Left lung (tissue), 14 donors: ENCODE measurements at regions of chr10 and their contacts with region 1.

Region 1: GRCh38 chr10:68897336-68897741 is 3.8 kb upstream of the DDX50 start:
- DNase-seq: peak in 2 of 4 donors; percentile 61 to 82
- ATAC-seq: no peak
- H3K4me3 ChIP-seq: no peak overlapping the region
- H3K27ac ChIP-seq: no peak overlapping the region
- H3K4me1 ChIP-seq: peaks cover 4 to 17% of the 10 kb centered on the region in 2 donors
- H3K27me3 ChIP-seq: no peaks in the 10 kb centered on the region
- CTCF ChIP-seq: peak; percentile 18 to 40

Region 2: GRCh38 chr10:68492118-68492517 is 405.2 kb before region 1 on chr10:
- intact Hi-C with region 1: no loop called
- DNase-seq: peak in 1 of 4 donors; percentile 19
- ATAC-seq: no peak
- H3K4me3 ChIP-seq: no peak overlapping the region
- H3K27ac ChIP-seq: no peak overlapping the region
- H3K4me1 ChIP-seq: no peaks in the 10 kb centered on the region
- H3K27me3 ChIP-seq: no peaks in the 10 kb centered on the region
- CTCF ChIP-seq: no peak

Region 3: GRCh38 chr10:68752711-68753350 is 144.5 kb before region 1 on chr10:
- intact Hi-C with region 1: no loop called
- DNase-seq: no peak
- ATAC-seq: no peak
- H3K4me3 ChIP-seq: no peak overlapping the region
- H3K27ac ChIP-seq: no peak overlapping the region
- H3K4me1 ChIP-seq: no peaks in the 10 kb centered on the region
- H3K27me3 ChIP-seq: no peaks in the 10 kb centered on the region
- CTCF ChIP-seq: no peak

Region 4: DNA sequence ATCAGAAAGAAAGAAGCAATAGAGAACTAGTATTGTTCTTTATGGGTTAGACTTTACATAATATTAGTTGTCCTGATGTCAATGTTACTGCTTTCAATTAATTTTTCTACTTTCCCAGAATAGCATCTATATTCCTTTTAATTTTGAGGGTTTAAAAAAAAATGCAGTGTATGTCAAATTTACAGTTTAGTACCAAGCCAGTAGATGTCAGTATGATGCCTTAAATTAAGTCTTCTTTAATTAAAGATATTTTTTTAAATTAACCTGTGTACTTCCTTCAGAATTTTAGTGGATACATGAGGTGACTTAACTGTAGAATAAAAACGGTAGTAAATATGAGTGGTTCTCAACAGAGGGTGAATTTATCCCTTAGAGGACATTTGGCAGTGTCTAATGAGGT is 105.2 kb before region 1 on chr10:
- intact Hi-C with region 1: loop called in 1 of 2 experiments (anchors 10 kb)
- DNase-seq: peak in 1 of 4 donors; percentile 6
- ATAC-seq: no peak
- H3K4me3 ChIP-seq: no peak overlapping the region
- H3K27ac ChIP-seq: no peak overlapping the region
- H3K4me1 ChIP-seq: no peaks in the 10 kb centered on the region
- H3K27me3 ChIP-seq: no peaks in the 10 kb centered on the region
- CTCF ChIP-seq: no peak

Region 5: DNA sequence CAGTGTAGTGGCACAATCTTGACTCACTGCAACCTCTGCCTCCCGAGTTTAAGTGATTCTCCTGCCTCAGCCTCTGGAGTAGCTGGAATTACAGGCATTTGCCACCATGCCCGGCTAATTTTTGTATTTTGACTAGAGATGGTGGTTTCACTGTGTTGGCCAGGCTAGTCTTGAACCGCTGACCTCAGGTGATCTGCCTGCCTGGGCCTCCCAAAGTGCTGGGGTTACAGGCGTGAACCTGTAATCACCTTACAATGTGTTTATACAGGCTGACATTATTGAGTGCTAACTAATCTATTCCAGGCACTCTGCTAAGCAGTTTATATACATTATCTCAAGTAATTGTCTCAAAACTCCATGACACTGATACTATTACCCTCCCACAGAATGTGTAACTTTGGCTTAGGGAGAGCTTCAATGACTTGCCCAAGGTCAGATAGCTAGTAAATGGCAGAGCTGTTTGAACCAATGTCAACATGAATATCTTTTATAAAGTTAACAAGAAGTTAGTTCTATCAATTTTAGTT is 128.1 kb after region 1 on chr10:
- intact Hi-C with region 1: no loop called
- DNase-seq: no peak
- ATAC-seq: no peak
- H3K4me3 ChIP-seq: no peak overlapping the region
- H3K27ac ChIP-seq: no peak overlapping the region
- H3K4me1 ChIP-seq: no peaks in the 10 kb centered on the region
- H3K27me3 ChIP-seq: no peaks in the 10 kb centered on the region
- CTCF ChIP-seq: no peak